MCF 10A (cell line): ENCODE measurements at regions of chr2 and their contacts with region 1.

Region 1: GRCh38 chr2:178397002-178397605 is 53.9 kb downstream of the PRKRA start:
- DNase-seq: peak; percentile 60
- H3K4me3 Mint-ChIP-seq: no peak overlapping the region
- H3K27ac Mint-ChIP-seq: no peak overlapping the region
- H3K4me1 Mint-ChIP-seq: peaks cover 5% of the 10 kb centered on the region
- H3K27me3 Mint-ChIP-seq: no peaks in the 10 kb centered on the region
- CTCF ChIP-seq: peak; percentile 51

Region 2: DNA sequence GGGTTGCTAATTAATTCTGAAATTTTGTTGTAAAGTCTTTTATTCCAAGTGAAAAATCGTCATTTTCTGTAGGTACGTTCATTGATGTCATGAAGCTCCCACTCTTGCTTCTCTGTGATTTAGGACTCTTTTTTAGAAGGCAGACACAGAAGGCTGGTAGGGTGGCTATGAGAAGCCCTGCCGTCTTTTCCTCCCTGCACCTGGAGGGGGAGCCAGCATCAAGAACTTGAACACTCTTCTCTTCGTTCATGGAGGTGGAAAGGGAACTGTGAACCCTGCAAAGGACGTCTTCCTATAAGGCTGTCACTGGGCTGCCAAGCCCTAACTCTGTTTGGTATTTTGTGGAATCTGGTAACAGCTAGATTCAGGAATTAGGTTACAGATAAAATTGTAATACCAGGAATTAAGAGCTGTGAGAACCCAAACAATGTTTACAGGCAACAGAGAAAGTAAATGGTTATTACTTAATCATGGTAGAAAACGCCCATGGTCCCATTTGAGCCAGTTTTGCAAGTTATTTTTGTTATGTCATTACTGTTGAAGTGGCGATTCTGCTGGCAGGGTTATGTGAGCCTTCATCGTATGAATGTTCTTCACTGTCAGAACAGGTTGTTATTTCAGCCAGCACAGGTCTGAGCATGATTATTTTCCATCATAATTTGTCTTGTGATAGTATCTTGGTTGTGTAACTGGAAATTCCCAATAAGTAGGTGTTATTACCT is 90.6 kb before region 1 on chr2:
- CTCF ChIA-PET with region 1: interaction called, 7 read pairs
- POLR2A ChIA-PET with region 1: no interaction called
- intact Hi-C with region 1: loop called (anchors 5 kb)
- DNase-seq: peak; percentile 70
- H3K4me3 Mint-ChIP-seq: no peak overlapping the region
- H3K27ac Mint-ChIP-seq: no peak overlapping the region
- H3K4me1 Mint-ChIP-seq: peaks cover 16% of the 10 kb centered on the region
- H3K27me3 Mint-ChIP-seq: no peaks in the 10 kb centered on the region
- CTCF ChIP-seq: peak; percentile 54

Region 3: GRCh38 chr2:178317811-178318210 is 79.3 kb before region 1 on chr2:
- CTCF ChIA-PET with region 1: no interaction called
- POLR2A ChIA-PET with region 1: no interaction called
- intact Hi-C with region 1: no loop called
- DNase-seq: no peak
- H3K4me3 Mint-ChIP-seq: no peak overlapping the region
- H3K27ac Mint-ChIP-seq: no peak overlapping the region
- H3K4me1 Mint-ChIP-seq: no peaks in the 10 kb centered on the region
- H3K27me3 Mint-ChIP-seq: no peaks in the 10 kb centered on the region
- CTCF ChIP-seq: no peak

Region 4: GRCh38 chr2:178377046-178377445 is 20.1 kb before region 1 on chr2:
- CTCF ChIA-PET with region 1: interaction called, 14 read pairs
- POLR2A ChIA-PET with region 1: interaction called, 3 read pairs
- intact Hi-C with region 1: no loop called
- DNase-seq: no peak
- H3K4me3 Mint-ChIP-seq: no peak overlapping the region
- H3K27ac Mint-ChIP-seq: no peak overlapping the region
- H3K4me1 Mint-ChIP-seq: no peaks in the 10 kb centered on the region
- H3K27me3 Mint-ChIP-seq: no peaks in the 10 kb centered on the region
- CTCF ChIP-seq: no peak

Region 5: GRCh38 chr2:178550352-178550751 is 153.2 kb after region 1 on chr2:
- CTCF ChIA-PET with region 1: no interaction called
- POLR2A ChIA-PET with region 1: no interaction called
- intact Hi-C with region 1: no loop called
- DNase-seq: no peak
- H3K4me3 Mint-ChIP-seq: no peak overlapping the region
- H3K27ac Mint-ChIP-seq: no peak overlapping the region
- H3K4me1 Mint-ChIP-seq: peaks cover 15% of the 10 kb centered on the region
- H3K27me3 Mint-ChIP-seq: no peaks in the 10 kb centered on the region
- CTCF ChIP-seq: no peak